B cell (primary cell): ENCODE measurements at regions of chr20 and their contacts with region 1.

Region 1: GRCh38 chr20:34768096-34768495 is 57.4 kb downstream of the NCOA6 start:
- DNase-seq: no peak
- ATAC-seq: no peak
- H3K4me3 ChIP-seq: no peak overlapping the region
- H3K4me3 Mint-ChIP-seq: no peak overlapping the region
- H3K27ac ChIP-seq: no peak overlapping the region
- H3K27ac Mint-ChIP-seq: no peak overlapping the region
- H3K4me1 ChIP-seq: no peaks in the 10 kb centered on the region
- H3K4me1 Mint-ChIP-seq: no peaks in the 10 kb centered on the region
- H3K27me3 ChIP-seq: no peaks in the 10 kb centered on the region
- H3K27me3 Mint-ChIP-seq: no peaks in the 10 kb centered on the region
- CTCF ChIP-seq: no peak

Region 2: GRCh38 chr20:34190679-34191090 is 577.4 kb before region 1 on chr20:
- CTCF ChIA-PET with region 1: interaction called, 8 read pairs
- POLR2A ChIA-PET with region 1: no interaction called
- intact Hi-C with region 1: loop called (anchors 5 kb)
- DNase-seq: peak; percentile 53
- ATAC-seq: no peak
- H3K4me3 ChIP-seq: no peak overlapping the region
- H3K4me3 Mint-ChIP-seq: no peak overlapping the region
- H3K27ac ChIP-seq: no peak overlapping the region
- H3K27ac Mint-ChIP-seq: no peak overlapping the region
- H3K4me1 ChIP-seq: no peaks in the 10 kb centered on the region
- H3K4me1 Mint-ChIP-seq: peaks cover 1% of the 10 kb centered on the region
- H3K27me3 ChIP-seq: peaks cover 0 to 7% (median 0%) of the 10 kb centered on the region in 4 experiments
- H3K27me3 Mint-ChIP-seq: peaks cover 48% of the 10 kb centered on the region
- CTCF ChIP-seq: peak; percentile 41

Region 3: GRCh38 chr20:34538671-34539123 is 229.4 kb before region 1 on chr20:
- CTCF ChIA-PET with region 1: interaction called, 89 read pairs
- POLR2A ChIA-PET with region 1: no interaction called
- intact Hi-C with region 1: no loop called
- DNase-seq: peak; percentile 67
- ATAC-seq: peak; percentile 68
- H3K4me3 ChIP-seq: no peak overlapping the region
- H3K4me3 Mint-ChIP-seq: no peak overlapping the region
- H3K27ac ChIP-seq: no peak overlapping the region
- H3K27ac Mint-ChIP-seq: no peak overlapping the region
- H3K4me1 ChIP-seq: no peaks in the 10 kb centered on the region
- H3K4me1 Mint-ChIP-seq: peaks cover 12% of the 10 kb centered on the region
- H3K27me3 ChIP-seq: no peaks in the 10 kb centered on the region
- H3K27me3 Mint-ChIP-seq: no peaks in the 10 kb centered on the region
- CTCF ChIP-seq: peak; percentile 92

Region 4: GRCh38 chr20:34753706-34754461 is 14.2 kb before region 1 on chr20:
- CTCF ChIA-PET with region 1: interaction called, 22 read pairs
- POLR2A ChIA-PET with region 1: no interaction called
- intact Hi-C with region 1: no loop called
- DNase-seq: no peak
- ATAC-seq: no peak
- H3K4me3 ChIP-seq: no peak overlapping the region
- H3K4me3 Mint-ChIP-seq: no peak overlapping the region
- H3K27ac ChIP-seq: no peak overlapping the region
- H3K27ac Mint-ChIP-seq: no peak overlapping the region
- H3K4me1 ChIP-seq: no peaks in the 10 kb centered on the region
- H3K4me1 Mint-ChIP-seq: no peaks in the 10 kb centered on the region
- H3K27me3 ChIP-seq: no peaks in the 10 kb centered on the region
- H3K27me3 Mint-ChIP-seq: no peaks in the 10 kb centered on the region
- CTCF ChIP-seq: no peak

Region 5: GRCh38 chr20:34781220-34781619 is 13.1 kb after region 1 on chr20:
- CTCF ChIA-PET with region 1: interaction called, 15 read pairs
- POLR2A ChIA-PET with region 1: no interaction called
- intact Hi-C with region 1: no loop called
- DNase-seq: no peak
- ATAC-seq: no peak
- H3K4me3 ChIP-seq: no peak overlapping the region
- H3K4me3 Mint-ChIP-seq: no peak overlapping the region
- H3K27ac ChIP-seq: no peak overlapping the region
- H3K27ac Mint-ChIP-seq: no peak overlapping the region
- H3K4me1 ChIP-seq: no peaks in the 10 kb centered on the region
- H3K4me1 Mint-ChIP-seq: no peaks in the 10 kb centered on the region
- H3K27me3 ChIP-seq: no peaks in the 10 kb centered on the region
- H3K27me3 Mint-ChIP-seq: no peaks in the 10 kb centered on the region
- CTCF ChIP-seq: no peak